Activated CD8-positive, alpha-beta T cell treated with anti-CD3 and anti-CD28 coated beads, Interleukin-2, amount 10 ng/mL, durations not matched to agents 7 days and 5 days (primary cell): ENCODE measurements at regions of chr19 and their contacts with region 1.

Region 1: DNA sequence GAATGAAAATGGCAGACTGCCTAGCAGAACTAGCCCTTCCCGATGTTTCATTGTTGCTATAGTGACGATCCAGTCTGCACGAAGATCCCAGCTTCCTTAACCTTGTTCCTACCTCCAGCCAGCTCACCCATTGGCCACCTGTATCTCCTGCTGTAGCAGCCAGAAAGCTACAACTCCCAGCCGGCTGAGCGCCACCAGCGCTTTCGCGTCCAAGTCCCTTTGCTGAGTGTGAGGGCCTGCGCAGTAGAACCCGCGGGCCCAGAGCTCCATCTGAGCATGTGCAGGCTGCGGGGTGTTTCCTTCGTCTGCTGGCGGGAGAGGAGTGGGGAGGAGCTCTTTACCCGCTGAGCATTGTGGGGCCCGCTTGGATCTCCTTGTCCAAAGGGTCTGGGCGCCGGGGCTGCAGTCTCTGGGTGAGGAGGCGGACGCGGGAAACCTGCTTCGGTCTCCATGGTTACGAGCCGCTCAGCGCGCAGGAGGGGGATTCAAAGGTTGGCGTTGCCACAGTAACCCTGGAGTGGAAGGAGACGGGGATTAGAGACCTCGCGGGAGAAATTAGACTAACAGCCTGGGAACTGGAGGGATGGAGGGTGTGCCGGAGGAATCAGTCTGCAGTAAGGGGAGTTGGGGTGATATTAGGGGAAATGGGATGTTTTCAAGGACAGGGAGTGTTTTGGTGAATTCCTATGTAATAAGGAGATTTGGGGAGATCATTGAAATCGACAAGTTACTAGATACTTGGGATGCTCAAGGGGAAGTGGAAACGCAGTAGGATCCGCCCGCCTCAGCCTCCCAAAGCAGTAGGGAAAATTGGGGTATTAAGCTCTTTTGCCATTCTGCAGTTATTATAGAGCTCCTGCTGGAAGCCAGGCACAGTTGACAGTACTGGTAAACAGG is 33.5 kb downstream of the ZSWIM9 start:
- DNase-seq: peak; percentile 96
- ATAC-seq: peak; percentile 100
- H3K4me3 Mint-ChIP-seq: no peak overlapping the region
- H3K27ac Mint-ChIP-seq: no peak overlapping the region
- H3K4me1 Mint-ChIP-seq: peaks cover 18% of the 10 kb centered on the region
- H3K27me3 Mint-ChIP-seq: no peaks in the 10 kb centered on the region

Region 2: DNA sequence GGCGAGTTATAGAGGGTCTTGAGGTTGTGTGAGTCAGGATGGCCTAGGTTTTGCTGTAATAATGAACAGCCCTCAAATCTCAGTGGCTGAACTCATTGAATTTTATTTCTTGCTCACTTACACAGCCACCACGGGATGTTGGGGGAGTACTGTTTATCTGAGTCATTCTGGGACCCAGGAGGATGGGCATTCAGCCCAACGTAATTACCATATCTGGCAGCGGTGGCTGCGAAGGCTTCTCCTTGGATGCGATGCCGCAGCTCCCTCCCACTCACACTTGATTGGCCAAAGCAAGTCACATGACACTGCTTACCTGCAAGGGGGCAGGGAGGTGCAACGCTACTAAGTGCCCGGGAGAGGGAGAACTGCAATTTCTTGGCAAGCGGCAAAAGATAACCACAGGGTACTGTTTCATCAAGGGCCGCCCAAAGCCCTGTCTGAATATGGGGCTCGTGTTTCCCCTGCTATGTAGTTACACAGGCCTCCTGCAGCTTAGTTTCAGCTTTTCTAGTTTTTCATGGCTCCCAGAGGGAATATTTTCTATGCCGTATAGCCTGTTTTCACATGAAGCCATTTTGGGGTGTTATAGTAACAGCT is 13.6 kb before region 1 on chr19:
- CTCF ChIA-PET with region 1: interaction called, 29 read pairs
- POLR2A ChIA-PET with region 1: interaction called, 11 read pairs
- DNase-seq: peak; percentile 75
- ATAC-seq: peak; percentile 71
- H3K4me3 Mint-ChIP-seq: no peak overlapping the region
- H3K27ac Mint-ChIP-seq: no peak overlapping the region
- H3K4me1 Mint-ChIP-seq: peaks cover 7% of the 10 kb centered on the region
- H3K27me3 Mint-ChIP-seq: no peaks in the 10 kb centered on the region

Region 3: DNA sequence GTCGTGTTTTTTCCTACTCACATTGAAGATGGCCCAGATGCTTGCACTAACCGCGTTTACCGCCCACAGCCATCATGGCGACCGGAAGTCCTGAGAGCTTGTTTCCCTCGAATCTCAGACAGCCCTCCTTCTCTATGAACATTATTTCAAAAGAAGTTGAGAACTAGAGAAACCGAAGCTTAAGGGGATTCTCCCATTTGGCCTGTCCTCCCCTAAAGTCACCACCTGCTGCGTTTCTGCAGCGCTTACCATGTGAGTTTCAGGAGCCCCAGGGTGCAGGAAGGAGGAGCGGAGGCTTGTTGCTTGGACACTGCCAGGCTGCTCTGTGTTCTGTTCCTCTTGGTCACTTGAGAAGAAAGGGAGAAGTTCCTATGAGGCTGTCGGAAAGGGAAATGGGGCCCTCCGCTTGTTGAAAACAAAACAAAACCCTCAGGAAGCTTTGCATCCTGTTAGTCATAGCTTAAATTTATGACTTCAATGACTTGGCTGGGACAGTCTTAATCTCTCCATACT is 45.6 kb after region 1 on chr19:
- CTCF ChIA-PET with region 1: no interaction called
- POLR2A ChIA-PET with region 1: interaction called, 23 read pairs
- DNase-seq: peak; percentile 89
- ATAC-seq: peak; percentile 84
- H3K4me3 Mint-ChIP-seq: peak overlapping the region; percentile 95
- H3K27ac Mint-ChIP-seq: peak overlapping the region; percentile 99
- H3K4me1 Mint-ChIP-seq: peaks cover 75% of the 10 kb centered on the region
- H3K27me3 Mint-ChIP-seq: no peaks in the 10 kb centered on the region